GM18951 (cell line): ENCODE measurements at regions of chr15 and their contacts with region 1.

Region 1: GRCh38 chr15:85412956-85413854 is 32.8 kb downstream of the AKAP13 start:
- POLR2A ChIP-seq: no peak

Region 2: DNA sequence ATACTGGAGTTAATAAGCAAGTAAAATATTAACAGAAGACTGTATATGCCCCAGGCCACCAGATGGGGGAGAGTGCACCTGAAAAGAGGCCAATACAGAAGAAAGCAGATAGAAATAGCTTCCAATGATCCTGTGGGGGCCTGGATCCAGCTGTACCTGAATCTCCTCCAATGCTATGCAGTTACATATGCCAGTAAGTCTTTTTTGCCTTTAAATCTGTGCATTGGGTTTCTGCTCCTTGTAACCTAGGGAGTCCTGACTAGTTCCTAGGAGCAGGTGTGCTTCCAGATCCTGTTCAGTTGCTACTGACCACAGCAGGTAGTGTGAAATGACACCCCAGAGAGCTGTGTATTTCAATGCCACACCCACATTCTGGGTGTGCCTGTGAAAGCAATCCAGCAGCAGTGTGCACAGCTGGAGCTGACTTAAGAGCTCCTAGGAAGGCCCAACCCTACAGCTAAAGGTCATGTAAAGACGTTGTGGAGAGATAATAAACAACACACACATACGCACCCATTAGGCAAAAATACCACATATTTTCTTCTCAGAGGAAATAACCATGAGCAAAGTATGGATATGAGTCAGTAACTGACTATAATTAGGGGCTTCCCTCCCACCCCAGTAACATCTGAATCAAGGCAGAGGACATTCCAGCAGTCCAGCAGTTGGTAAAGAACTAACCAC is 95.0 kb before region 1 on chr15:
- in situ Hi-C with region 1: loop called (anchors 10 kb)
- POLR2A ChIP-seq: no peak